ENCODE measurements at regions of chr14 and their contacts with region 1.

Region 1: GRCh38 chr14:95936041-95936440 is 59.4 kb downstream of the TUNAR start:
- DNase-seq: no peak
- H3K4me3 ChIP-seq: no peak overlapping the region
- H3K4me3 Mint-ChIP-seq: no peak overlapping the region
- H3K27ac Mint-ChIP-seq: no peak overlapping the region
- H3K4me1 ChIP-seq: no peaks in the 10 kb centered on the region
- H3K4me1 Mint-ChIP-seq: no peaks in the 10 kb centered on the region
- H3K27me3 ChIP-seq: no peaks in the 10 kb centered on the region; the same call in 1 of the 2 replicates
- H3K27me3 Mint-ChIP-seq: no peaks in the 10 kb centered on the region
- CTCF ChIP-seq: no peak

Region 2: DNA sequence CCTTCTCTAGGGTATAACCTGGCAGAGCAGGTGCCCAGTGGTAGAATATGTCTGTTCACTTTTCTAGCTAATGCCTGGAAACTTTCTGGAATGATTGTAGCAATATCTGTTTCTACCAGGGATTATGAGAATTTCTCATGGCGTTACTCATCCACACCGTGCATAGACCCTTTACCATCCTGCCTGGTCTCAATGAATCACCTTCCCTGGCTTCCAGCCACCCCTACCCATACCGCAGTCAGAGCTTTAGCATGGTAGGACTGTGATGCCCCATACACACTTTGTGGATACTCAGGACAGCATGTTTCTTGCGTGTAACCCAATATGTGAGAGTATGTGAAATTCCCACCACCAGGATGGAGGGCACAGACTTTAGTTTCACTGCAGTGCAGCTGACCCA is 14.0 kb before region 1 on chr14:
- CTCF ChIA-PET with region 1: interaction called, 10 read pairs
- POLR2A ChIA-PET with region 1: no interaction called
- intact Hi-C with region 1: no loop called
- DNase-seq: no peak
- H3K4me3 ChIP-seq: no peak overlapping the region
- H3K4me3 Mint-ChIP-seq: no peak overlapping the region
- H3K27ac Mint-ChIP-seq: no peak overlapping the region
- H3K4me1 ChIP-seq: no peaks in the 10 kb centered on the region
- H3K4me1 Mint-ChIP-seq: no peaks in the 10 kb centered on the region
- H3K27me3 ChIP-seq: no peaks in the 10 kb centered on the region; the same call in none of the 2 replicates
- H3K27me3 Mint-ChIP-seq: peaks cover 17% of the 10 kb centered on the region
- CTCF ChIP-seq: no peak

Region 3: GRCh38 chr14:95993768-95994592 is 57.9 kb after region 1 on chr14:
- CTCF ChIA-PET with region 1: no interaction called
- POLR2A ChIA-PET with region 1: no interaction called
- intact Hi-C with region 1: no loop called
- DNase-seq: peak in 1 of 2 experiments; percentile 25
- H3K4me3 ChIP-seq: no peak overlapping the region
- H3K4me3 Mint-ChIP-seq: no peak overlapping the region
- H3K27ac Mint-ChIP-seq: no peak overlapping the region
- H3K4me1 ChIP-seq: no peaks in the 10 kb centered on the region
- H3K4me1 Mint-ChIP-seq: no peaks in the 10 kb centered on the region
- H3K27me3 ChIP-seq: no peaks in the 10 kb centered on the region
- H3K27me3 Mint-ChIP-seq: peaks cover 3% of the 10 kb centered on the region
- CTCF ChIP-seq: peak; percentile 76 to 79